ENCODE measurements at regions of chr2 and their contacts with region 1.

Region 1: DNA sequence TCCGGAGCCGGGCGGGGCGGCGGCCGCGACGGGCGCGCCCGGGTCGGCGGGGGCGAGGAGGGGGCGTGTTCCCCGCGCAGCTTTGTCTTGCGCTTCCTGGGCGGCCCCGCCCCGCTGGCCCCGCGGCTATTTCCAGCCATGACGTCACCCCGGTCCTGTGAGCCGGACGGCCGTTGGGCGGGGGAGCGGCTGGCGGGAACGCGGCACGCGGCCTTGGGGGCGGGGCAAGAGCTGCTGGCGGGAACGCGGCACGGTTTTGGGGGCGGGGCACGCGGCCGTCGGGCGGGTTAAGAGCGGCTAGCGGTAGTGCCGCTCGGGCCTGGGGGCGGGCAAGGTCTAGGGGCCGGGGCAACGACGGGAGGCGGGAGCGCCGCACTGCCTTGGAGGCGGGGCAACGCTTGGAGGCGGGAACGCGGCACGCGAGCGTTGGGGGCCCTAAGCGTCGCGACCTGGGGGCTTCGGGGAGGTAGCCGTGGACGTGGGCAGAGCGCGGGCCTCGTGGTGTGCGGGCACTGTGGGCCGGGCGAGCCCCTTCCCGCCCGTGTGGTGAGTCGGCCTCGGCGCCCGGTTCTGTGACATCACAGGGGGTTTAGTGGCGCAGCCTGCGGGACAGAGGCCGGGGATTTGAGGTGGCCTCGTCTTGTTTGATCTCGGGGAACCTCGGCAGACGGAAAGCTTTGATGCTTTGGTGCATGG is 704 bp downstream of the KLF11 start:
- DNase-seq: peak; percentile 73
- ATAC-seq: peak; percentile 84
- H3K4me3 ChIP-seq: peak overlapping the region; percentile 61 to 74
- H3K27ac ChIP-seq: peak overlapping the region; percentile 78
- H3K4me1 ChIP-seq: peaks cover 10% of the 10 kb centered on the region
- H3K27me3 ChIP-seq: no peaks in the 10 kb centered on the region
- CTCF ChIP-seq: no peak

Region 2: DNA sequence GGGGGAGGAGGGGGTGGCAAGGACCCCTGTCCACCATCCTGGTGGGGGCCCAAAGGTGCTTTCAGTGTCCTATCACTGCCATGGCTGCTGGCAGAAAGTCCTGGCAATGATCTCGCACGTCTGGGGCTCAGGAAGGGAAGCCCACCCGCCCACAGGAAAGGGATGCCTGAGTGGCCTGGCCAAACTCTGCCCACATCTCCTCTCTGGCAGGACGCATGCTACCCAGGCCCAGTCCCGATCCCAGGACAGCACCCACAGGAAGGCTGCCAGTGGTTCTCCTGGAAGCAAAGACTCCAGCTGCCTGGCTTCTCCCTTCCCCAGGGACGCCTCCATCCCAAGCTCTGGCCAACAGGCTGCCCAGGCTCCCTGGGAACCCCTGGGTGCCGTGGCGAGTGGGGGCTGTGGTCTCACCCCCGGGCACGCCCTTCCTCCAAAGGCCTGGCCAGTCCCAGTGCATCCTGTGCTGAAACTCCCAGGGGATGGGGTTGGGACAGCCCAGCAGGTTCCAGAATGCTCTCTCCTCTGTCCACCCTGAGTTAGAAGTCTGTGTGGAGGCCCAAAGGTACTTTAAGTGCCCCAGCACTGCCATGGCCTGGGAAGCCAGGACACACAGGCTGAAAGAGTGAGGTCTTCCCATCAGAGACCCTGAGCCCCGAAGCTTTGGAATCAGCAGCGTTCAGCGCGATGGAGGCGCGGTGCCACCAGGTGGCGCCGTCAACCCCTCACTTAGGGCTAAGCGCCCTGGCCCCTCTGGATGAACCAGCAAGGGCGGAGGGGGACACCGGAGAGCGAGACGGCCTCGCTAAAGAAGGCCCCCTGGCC is 230.5 kb before region 1 on chr2:
- CTCF ChIA-PET with region 1: interaction called, 10 read pairs
- POLR2A ChIA-PET with region 1: no interaction called
- in situ Hi-C with region 1: no loop called
- intact Hi-C with region 1: loop called (anchors 5 kb)
- DNase-seq: no peak
- ATAC-seq: peak; percentile 91
- H3K4me3 ChIP-seq: peak overlapping the region in 1 of 2 experiments; percentile 23; a peak in 2 of 4 replicates
- H3K27ac ChIP-seq: no peak overlapping the region
- H3K4me1 ChIP-seq: no peaks in the 10 kb centered on the region
- H3K27me3 ChIP-seq: no peaks in the 10 kb centered on the region
- CTCF ChIP-seq: peak; percentile 98

Region 3: GRCh38 chr2:9961013-9961412 is 83.0 kb before region 1 on chr2:
- CTCF ChIA-PET with region 1: no interaction called
- POLR2A ChIA-PET with region 1: no interaction called
- in situ Hi-C with region 1: no loop called
- intact Hi-C with region 1: no loop called
- DNase-seq: no peak
- ATAC-seq: no peak
- H3K4me3 ChIP-seq: no peak overlapping the region
- H3K27ac ChIP-seq: no peak overlapping the region
- H3K4me1 ChIP-seq: no peaks in the 10 kb centered on the region
- H3K27me3 ChIP-seq: no peaks in the 10 kb centered on the region
- CTCF ChIP-seq: no peak

Region 4: DNA sequence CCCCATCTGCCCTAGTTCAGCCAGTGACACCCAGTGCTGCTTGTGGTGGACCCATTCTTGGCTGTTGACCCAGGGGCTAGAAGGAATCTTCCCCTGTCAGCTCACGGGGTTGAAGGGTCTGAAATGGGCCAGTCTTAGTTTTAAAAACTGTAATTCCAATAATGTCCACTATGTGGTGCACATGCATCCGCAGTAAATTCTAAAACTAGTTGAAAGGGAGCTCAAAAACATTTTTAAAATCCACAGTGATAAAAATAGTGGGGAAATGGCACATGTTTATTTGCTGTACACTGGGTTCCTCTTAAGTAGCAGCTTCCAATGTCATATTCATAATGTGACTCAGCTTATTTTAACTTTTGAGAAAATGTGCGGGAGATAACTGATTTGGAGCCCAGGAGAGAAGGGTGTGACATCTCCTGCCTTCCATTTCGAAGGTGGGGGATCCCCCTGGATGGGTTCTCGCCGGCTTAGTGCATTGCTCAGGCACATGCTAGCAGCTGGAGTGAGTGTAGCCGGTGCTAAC is 59.8 kb before region 1 on chr2:
- CTCF ChIA-PET with region 1: interaction called, 20 read pairs
- POLR2A ChIA-PET with region 1: no interaction called
- in situ Hi-C with region 1: no loop called
- intact Hi-C with region 1: loop called (anchors 5 kb)
- DNase-seq: peak; percentile 20
- ATAC-seq: peak; percentile 76
- H3K4me3 ChIP-seq: no peak overlapping the region
- H3K27ac ChIP-seq: no peak overlapping the region
- H3K4me1 ChIP-seq: no peaks in the 10 kb centered on the region
- H3K27me3 ChIP-seq: no peaks in the 10 kb centered on the region
- CTCF ChIP-seq: peak; percentile 87

Region 5: GRCh38 chr2:10302479-10303180 is 258.6 kb after region 1 on chr2 and contains the start of gene HPCAL1:
- CTCF ChIA-PET with region 1: interaction called, 12 read pairs
- POLR2A ChIA-PET with region 1: no interaction called
- in situ Hi-C with region 1: no loop called
- intact Hi-C with region 1: no loop called
- DNase-seq: no peak
- ATAC-seq: peak; percentile 87
- H3K4me3 ChIP-seq: peak within 1 kb of the TSS; percentile 88 to 94
- H3K27ac ChIP-seq: peak within 1 kb of the TSS; percentile 91
- H3K4me1 ChIP-seq: peaks cover 52% of the 10 kb centered on the region
- H3K27me3 ChIP-seq: no peaks in the 10 kb centered on the region
- CTCF ChIP-seq: peak; percentile 82
- total RNA-seq, gene HPCAL1: 234 TPM